ENCODE measurements at regions of chr11 and their contacts with region 1.

Region 1: DNA sequence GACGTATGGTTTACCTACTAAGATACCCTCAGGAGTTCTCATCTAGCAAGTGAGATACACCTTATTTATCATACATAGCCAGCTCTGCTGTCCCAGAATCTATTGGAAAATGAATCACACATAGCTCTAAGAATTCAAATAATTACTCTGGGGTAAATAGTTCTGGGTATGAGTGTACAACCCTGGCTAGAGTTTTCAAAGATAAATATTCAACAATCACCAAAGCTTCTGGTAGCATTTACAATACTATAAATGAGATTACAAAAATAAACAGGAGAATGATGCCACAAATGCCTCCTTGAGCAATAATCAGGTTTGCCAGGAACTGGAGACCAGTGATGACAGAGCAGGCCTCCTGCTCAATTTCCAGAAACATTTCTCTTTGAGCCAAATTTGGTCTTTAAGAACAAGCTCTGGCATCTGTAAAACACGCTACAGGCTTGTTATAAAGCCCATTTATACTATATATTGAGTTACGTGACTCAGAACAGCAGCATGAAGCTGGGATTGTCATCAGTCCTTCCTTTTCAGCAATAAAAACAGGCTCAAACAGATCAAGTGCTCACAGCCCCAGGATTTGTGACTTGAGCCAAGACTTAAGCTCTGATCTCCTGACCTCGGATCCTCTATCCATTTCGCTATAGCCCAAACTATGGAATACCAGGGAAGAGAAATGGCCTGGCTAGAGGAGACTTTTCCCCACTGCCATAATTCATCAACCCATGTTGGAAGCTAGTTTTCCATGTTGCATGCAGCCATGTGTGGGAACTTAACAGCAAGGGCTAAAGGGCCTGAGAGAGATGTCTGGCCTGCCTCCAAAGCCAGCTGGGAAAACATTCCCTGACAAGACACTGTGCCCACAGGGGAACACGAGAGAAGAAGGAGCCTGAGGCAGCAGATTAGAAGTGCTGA is 19.7 kb downstream of the RAB30 start:
- DNase-seq: peak; percentile 99
- H3K4me3 ChIP-seq: peak overlapping the region; percentile 13; the same call in 1 of the 2 replicates
- CTCF ChIP-seq: no peak

Region 2: GRCh38 chr11:83033972-83034672 is 17.9 kb before region 1 on chr11:
- CTCF ChIA-PET with region 1: interaction called, 4 read pairs
- POLR2A ChIA-PET with region 1: interaction called, 46 read pairs
- DNase-seq: no peak
- H3K4me3 ChIP-seq: peak overlapping the region; percentile 50
- CTCF ChIP-seq: no peak

Region 3: GRCh38 chr11:83063073-83063754 is 11.2 kb after region 1 on chr11:
- CTCF ChIA-PET with region 1: interaction called, 7 read pairs
- POLR2A ChIA-PET with region 1: interaction called, 10 read pairs
- DNase-seq: peak; percentile 40
- H3K4me3 ChIP-seq: no peak overlapping the region
- CTCF ChIP-seq: no peak

Region 4: GRCh38 chr11:83071567-83072349 is 19.7 kb after region 1 on chr11 and contains the start of gene RAB30:
- CTCF ChIA-PET with region 1: interaction called, 5 read pairs
- POLR2A ChIA-PET with region 1: interaction called, 25 read pairs
- DNase-seq: peak; percentile 99
- H3K4me3 ChIP-seq: peak within 1 kb of the TSS; percentile 96
- CTCF ChIP-seq: no peak

Region 5: GRCh38 chr11:83156150-83156995 is 104.4 kb after region 1 on chr11:
- CTCF ChIA-PET with region 1: no interaction called
- POLR2A ChIA-PET with region 1: interaction called, 12 read pairs
- DNase-seq: peak; percentile 99
- H3K4me3 ChIP-seq: peak overlapping the region; percentile 73
- CTCF ChIP-seq: no peak

Measured in AG04449 (cell line).